ENCODE measurements at regions of chr1 and their contacts with region 1.

Region 1: DNA sequence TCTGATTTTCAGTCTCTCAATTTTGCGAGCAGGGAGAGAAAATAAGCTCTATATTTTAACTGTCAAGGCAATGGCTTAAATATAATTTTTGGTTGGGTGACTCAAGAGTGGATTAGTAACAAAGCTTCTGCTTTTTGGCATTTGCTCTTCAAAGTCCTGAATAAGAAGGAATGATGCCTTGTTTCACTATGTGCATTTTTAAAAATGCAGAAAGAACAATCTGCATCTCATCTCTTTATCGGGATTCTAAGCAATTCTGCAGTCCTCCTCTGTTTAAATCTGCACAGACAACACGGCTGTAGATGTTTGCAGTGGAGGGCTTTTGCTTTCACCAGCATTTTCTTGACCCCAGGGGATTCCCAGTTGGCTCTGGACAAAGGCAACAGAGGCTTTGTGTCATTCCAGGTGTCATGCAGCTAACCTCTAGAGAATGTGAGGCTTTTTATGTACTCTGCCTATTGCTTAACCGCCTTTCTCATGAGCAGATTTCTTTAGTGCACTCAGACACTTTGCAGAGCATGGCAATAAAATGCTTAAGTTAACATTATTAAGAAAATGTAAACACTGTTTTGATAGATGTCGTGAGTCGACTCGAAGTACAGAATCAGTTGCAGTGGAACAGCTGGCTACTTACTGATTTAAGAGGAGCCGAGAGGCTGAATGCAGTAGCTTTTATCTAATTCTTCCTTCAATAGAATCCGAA is 783.2 kb upstream of the NEGR1 start:
- DNase-seq: no peak
- H3K4me3 ChIP-seq: no peak overlapping the region
- H3K27ac ChIP-seq: no peak overlapping the region
- H3K4me1 ChIP-seq: no peaks in the 10 kb centered on the region
- H3K27me3 ChIP-seq: no peaks in the 10 kb centered on the region
- CTCF ChIP-seq: no peak
- EP300 ChIP-seq: no peak
- POLR2A ChIP-seq: no peak

Region 2: GRCh38 chr1:72412286-72412685 is 653.2 kb before region 1 on chr1:
- intact Hi-C with region 1: loop called in 1 of 4 experiments (anchors 10 kb)
- DNase-seq: no peak
- H3K4me3 ChIP-seq: no peak overlapping the region
- H3K27ac ChIP-seq: no peak overlapping the region
- H3K4me1 ChIP-seq: no peaks in the 10 kb centered on the region
- H3K27me3 ChIP-seq: no peaks in the 10 kb centered on the region
- CTCF ChIP-seq: no peak
- EP300 ChIP-seq: no peak
- POLR2A ChIP-seq: no peak

Region 3: GRCh38 chr1:73511038-73511437 is 445.5 kb after region 1 on chr1:
- intact Hi-C with region 1: no loop called
- DNase-seq: no peak
- H3K4me3 ChIP-seq: no peak overlapping the region
- H3K27ac ChIP-seq: no peak overlapping the region
- H3K4me1 ChIP-seq: no peaks in the 10 kb centered on the region
- H3K27me3 ChIP-seq: no peaks in the 10 kb centered on the region
- CTCF ChIP-seq: no peak
- EP300 ChIP-seq: no peak
- POLR2A ChIP-seq: no peak

Measured in ovary (tissue), 10 donors.